Colonic mucosa (tissue), 4 donors: ENCODE measurements at regions of chr7 and their contacts with region 1.

Region 1: GRCh38 chr7:151315038-151315655 is 26.5 kb upstream of the NUB1 start:
- DNase-seq: peak; percentile 84
- H3K4me3 ChIP-seq: no peak overlapping the region
- H3K27ac ChIP-seq: no peak overlapping the region
- H3K4me1 ChIP-seq: no peaks in the 10 kb centered on the region
- H3K27me3 ChIP-seq: no peaks in the 10 kb centered on the region
- CTCF ChIP-seq: peak; percentile 80

Region 2: DNA sequence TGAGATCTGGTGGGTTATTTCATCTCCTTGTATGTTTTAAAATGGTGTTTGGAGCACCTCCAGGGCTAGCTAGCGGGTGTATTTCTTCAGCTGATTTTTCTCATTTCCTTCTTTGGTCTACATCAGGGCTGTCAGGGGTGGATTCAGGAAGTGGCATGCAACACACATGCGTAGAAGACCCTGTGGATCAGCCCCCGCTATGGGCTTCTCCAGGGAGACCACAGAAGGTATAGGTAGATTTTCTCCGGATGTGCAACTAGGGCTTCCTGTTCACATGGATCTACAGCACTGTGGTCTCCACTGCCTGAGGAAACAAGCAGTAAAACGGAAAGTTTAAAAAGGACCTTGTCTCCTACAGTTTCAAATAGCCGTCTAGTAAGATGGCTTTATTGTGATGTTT is 36.8 kb after region 1 on chr7:
- intact Hi-C with region 1: loop called (anchors 2 kb)
- DNase-seq: no peak
- H3K4me3 ChIP-seq: no peak overlapping the region
- H3K27ac ChIP-seq: no peak overlapping the region
- H3K4me1 ChIP-seq: peaks cover 5% of the 10 kb centered on the region
- H3K27me3 ChIP-seq: no peaks in the 10 kb centered on the region
- CTCF ChIP-seq: no peak

Region 3: GRCh38 chr7:151448261-151449252 is 133.4 kb after region 1 on chr7:
- intact Hi-C with region 1: loop called (anchors 5 kb)
- DNase-seq: peak; percentile 72
- H3K4me3 ChIP-seq: peak overlapping the region; percentile 46
- H3K27ac ChIP-seq: no peak overlapping the region
- H3K4me1 ChIP-seq: peaks cover 3% of the 10 kb centered on the region
- H3K27me3 ChIP-seq: no peaks in the 10 kb centered on the region
- CTCF ChIP-seq: peak; percentile 69